CD4-positive, alpha-beta memory T cell (primary cell): ENCODE measurements at regions of chr20 and their contacts with region 1.

Region 1: DNA sequence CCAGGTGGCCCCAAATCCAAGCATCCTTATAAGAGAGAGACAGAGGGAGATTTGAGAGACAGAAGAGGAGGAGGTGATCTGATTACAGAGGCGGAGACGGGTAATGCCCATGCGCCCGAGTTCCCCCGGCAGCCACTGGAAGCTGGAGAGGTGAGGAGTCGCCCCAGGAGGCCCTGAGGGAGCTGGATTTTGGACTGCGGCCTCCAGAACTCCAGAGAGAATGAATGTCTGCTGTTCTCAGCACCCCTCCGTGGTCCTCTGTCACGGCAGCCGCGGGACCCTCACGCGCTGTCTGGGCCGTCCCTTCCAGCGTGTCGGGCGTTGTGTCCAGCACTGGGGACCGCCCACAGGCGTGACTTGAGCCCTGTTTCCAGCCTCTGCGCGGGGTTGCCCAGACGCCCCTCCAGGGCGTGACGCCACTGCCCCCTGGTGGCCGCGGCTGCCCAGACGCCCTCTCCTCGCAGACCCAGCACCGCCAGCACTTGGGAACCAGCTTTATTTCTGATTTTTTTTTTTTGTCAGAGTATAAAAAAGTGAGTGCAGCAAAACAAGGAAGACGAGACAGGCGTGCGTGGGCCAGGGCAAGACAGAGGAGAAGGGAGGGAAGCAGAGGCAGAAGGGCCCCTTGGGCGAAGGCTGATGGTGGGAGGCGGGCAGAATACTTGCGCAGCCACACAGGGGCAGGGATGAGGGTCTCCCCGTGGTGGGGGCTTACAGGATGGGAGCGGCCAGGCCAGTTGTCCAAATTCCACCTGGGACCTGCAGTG is 4.1 kb upstream of the ZNF512B start:
- DNase-seq: peak; percentile 69 to 75 (median 71)
- H3K4me3 ChIP-seq: no peak overlapping the region
- H3K4me3 Mint-ChIP-seq: peak overlapping the region in 1 of 8 donors; percentile 43
- H3K27ac ChIP-seq: no peak overlapping the region
- H3K27ac Mint-ChIP-seq: peak overlapping the region in 6 of 7 donors; percentile 46 to 89 (median 71)
- H3K4me1 ChIP-seq: peaks cover 30% of the 10 kb centered on the region
- H3K4me1 Mint-ChIP-seq: peaks cover 22 to 55% (median 35%) of the 10 kb centered on the region in 4 donors
- H3K27me3 ChIP-seq: no peaks in the 10 kb centered on the region
- H3K27me3 Mint-ChIP-seq: no peaks in the 10 kb centered on the region

Region 2: DNA sequence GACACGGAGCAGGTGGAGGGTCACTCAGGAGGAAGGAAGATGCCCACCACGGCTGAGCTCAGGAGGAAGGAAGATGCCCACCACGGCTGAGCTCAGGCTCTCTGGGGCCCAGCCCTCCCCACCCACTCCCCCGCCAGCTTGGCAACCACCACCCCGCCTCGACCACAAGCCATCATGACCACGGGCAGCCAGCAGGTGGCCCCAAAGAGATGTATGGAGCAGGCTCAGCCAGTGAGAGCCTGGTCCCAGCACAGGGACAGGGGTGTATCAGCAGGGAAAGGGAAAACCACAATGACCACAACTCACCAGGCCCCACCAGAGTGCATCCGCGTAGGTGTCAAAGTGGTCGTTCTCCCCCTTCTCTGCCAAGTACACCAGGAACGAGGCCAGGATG is 531.7 kb before region 1 on chr20:
- CTCF ChIA-PET with region 1: no interaction called
- POLR2A ChIA-PET with region 1: no interaction called
- intact Hi-C with region 1: loop called (anchors 5 kb)
- DNase-seq: peak; percentile 46 to 68 (median 51)
- H3K4me3 ChIP-seq: no peak overlapping the region
- H3K4me3 Mint-ChIP-seq: peak overlapping the region in 2 of 8 donors; percentile 13 to 57
- H3K27ac ChIP-seq: no peak overlapping the region
- H3K27ac Mint-ChIP-seq: peak overlapping the region in 1 of 7 donors; percentile 62
- H3K4me1 ChIP-seq: peaks cover 16% of the 10 kb centered on the region
- H3K4me1 Mint-ChIP-seq: peaks cover 8 to 17% (median 15%) of the 10 kb centered on the region in 4 donors
- H3K27me3 ChIP-seq: no peaks in the 10 kb centered on the region
- H3K27me3 Mint-ChIP-seq: peaks cover 0 to 5% of the 10 kb centered on the region in 2 donors

Region 3: DNA sequence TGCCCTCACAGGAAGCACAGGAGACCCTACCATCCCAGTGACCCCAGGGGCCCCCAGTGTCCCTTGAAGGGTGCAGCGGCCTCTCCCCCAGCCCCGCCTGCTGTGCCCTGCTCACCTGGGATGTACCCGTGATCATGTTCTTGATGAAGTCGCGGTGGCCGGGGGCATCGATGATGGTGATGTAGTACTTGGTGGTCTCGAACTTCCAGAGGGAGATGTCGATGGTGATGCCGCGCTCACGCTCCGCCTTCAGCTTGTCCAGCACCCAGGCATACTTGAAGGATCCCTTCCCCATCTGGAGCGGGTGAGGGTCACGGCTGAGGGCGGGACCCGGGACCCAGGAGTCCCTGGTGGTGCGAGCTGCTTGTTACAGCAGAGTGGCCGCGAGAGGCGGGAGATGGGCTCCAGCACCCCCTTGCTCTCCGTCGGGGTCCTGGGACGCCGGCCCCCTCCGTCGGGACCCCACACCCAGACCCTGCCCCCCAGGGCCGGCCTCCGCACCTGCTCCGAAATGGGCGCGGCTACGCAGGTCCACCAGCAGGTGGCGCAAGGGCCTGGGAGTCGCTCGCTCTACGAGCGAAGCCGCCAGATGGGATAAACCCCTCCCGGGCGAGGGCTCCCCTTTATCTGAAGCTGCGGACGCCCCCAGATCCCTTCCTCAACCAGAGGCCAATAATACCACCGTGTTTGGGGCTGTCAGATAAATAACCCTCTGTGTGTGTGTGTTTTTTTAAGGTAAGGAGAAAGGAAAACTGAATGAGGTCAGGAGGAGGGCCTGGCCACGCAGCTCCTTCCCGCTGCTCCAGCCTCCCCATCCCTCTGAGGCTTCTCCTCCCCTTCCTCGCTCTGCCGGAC is 477.9 kb before region 1 on chr20:
- CTCF ChIA-PET with region 1: interaction called, 11 read pairs
- POLR2A ChIA-PET with region 1: no interaction called
- intact Hi-C with region 1: loop called (anchors 1 kb)
- DNase-seq: peak; percentile 63 to 72 (median 68)
- H3K4me3 ChIP-seq: peak overlapping the region in 1 of 2 donors; percentile 43
- H3K4me3 Mint-ChIP-seq: peak overlapping the region in 7 of 8 donors; percentile 48 to 83 (median 71)
- H3K27ac ChIP-seq: no peak overlapping the region
- H3K27ac Mint-ChIP-seq: no peak overlapping the region
- H3K4me1 ChIP-seq: peaks cover 18% of the 10 kb centered on the region
- H3K4me1 Mint-ChIP-seq: peaks cover 1 to 8% (median 3%) of the 10 kb centered on the region in 4 donors
- H3K27me3 ChIP-seq: peaks cover 12% of the 10 kb centered on the region
- H3K27me3 Mint-ChIP-seq: peaks cover 5 to 9% of the 10 kb centered on the region in 2 donors

Region 4: DNA sequence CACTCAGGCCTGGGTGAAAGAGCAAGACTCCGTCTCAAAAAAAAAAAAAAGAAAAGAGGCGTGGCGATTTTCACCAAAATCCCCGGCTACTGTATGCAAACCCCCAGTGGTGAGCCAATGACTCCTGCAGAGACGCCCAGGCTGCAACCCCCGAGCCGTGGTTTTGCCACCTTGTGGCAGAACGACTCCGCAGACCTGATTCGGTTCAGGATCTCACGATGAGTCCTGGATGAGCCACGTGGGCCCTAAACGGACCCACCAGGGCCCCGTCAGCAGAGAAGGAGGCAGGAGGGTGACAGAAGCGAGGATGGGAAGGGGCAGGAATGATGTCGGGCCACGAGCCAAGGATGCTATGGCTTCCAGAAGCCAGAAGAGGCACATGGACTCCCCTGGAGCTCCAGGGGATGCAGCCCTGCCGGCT is 191.8 kb before region 1 on chr20:
- CTCF ChIA-PET with region 1: interaction called, 11 read pairs
- POLR2A ChIA-PET with region 1: no interaction called
- intact Hi-C with region 1: loop called (anchors 1 kb)
- DNase-seq: peak; percentile 65 to 83 (median 73)
- H3K4me3 ChIP-seq: no peak overlapping the region
- H3K4me3 Mint-ChIP-seq: peak overlapping the region in 6 of 8 donors; percentile 55 to 80 (median 70)
- H3K27ac ChIP-seq: no peak overlapping the region
- H3K27ac Mint-ChIP-seq: peak overlapping the region; percentile 17 to 90 (median 82)
- H3K4me1 ChIP-seq: peaks cover 14% of the 10 kb centered on the region
- H3K4me1 Mint-ChIP-seq: peaks cover 16 to 27% (median 17%) of the 10 kb centered on the region in 4 donors
- H3K27me3 ChIP-seq: no peaks in the 10 kb centered on the region
- H3K27me3 Mint-ChIP-seq: no peaks in the 10 kb centered on the region

Region 5: GRCh38 chr20:63911176-63911575 is 62.6 kb before region 1 on chr20:
- CTCF ChIA-PET with region 1: interaction called, 15 read pairs
- POLR2A ChIA-PET with region 1: no interaction called
- intact Hi-C with region 1: loop called (anchors 1 kb)
- DNase-seq: no peak
- H3K4me3 ChIP-seq: no peak overlapping the region
- H3K4me3 Mint-ChIP-seq: peak overlapping the region in 2 of 8 donors; percentile 32 to 37
- H3K27ac ChIP-seq: no peak overlapping the region
- H3K27ac Mint-ChIP-seq: peak overlapping the region in 6 of 7 donors; percentile 29 to 85 (median 74)
- H3K4me1 ChIP-seq: peaks cover 28% of the 10 kb centered on the region
- H3K4me1 Mint-ChIP-seq: peaks cover 24 to 54% (median 41%) of the 10 kb centered on the region in 4 donors
- H3K27me3 ChIP-seq: no peaks in the 10 kb centered on the region
- H3K27me3 Mint-ChIP-seq: no peaks in the 10 kb centered on the region

Region 6: DNA sequence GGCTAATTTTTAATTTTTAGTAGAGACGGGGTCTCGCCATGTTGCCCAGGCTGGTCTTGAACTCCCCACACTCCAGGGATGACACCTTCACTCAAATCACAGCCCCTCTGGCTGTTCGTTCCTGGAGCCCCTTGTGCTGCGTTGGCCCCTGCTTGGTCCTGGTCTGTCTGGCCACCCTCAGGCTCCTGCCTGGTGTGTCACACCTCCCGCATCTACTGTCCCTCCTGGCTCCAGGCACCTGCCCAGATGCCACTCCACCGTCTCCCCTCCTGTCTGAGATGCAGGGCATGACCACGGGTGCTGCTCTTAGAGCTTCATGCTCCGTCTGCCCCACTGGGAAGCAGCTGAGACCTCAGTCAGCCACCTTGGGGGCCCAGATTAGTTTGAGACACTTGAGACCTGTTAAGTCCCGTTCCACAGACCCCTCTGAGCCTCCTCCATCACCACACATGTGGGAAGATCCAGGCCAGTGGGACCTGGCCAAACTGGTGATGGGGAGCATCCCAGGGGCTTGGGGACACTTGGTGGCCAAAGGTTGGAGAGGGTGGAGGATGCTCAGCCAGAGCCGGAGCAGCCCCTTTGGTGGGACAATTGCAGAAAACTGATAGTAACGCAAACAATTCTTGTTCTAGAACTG is 155.4 kb after region 1 on chr20:
- CTCF ChIA-PET with region 1: no interaction called
- POLR2A ChIA-PET with region 1: no interaction called
- intact Hi-C with region 1: no loop called
- DNase-seq: no peak
- H3K4me3 ChIP-seq: no peak overlapping the region
- H3K4me3 Mint-ChIP-seq: no peak overlapping the region
- H3K27ac ChIP-seq: no peak overlapping the region
- H3K27ac Mint-ChIP-seq: no peak overlapping the region
- H3K4me1 ChIP-seq: no peaks in the 10 kb centered on the region
- H3K4me1 Mint-ChIP-seq: no peaks in the 10 kb centered on the region
- H3K27me3 ChIP-seq: no peaks in the 10 kb centered on the region
- H3K27me3 Mint-ChIP-seq: peaks cover 14 to 17% of the 10 kb centered on the region in 2 donors